ENCODE measurements at regions of chr2 and their contacts with region 1.

Region 1: DNA sequence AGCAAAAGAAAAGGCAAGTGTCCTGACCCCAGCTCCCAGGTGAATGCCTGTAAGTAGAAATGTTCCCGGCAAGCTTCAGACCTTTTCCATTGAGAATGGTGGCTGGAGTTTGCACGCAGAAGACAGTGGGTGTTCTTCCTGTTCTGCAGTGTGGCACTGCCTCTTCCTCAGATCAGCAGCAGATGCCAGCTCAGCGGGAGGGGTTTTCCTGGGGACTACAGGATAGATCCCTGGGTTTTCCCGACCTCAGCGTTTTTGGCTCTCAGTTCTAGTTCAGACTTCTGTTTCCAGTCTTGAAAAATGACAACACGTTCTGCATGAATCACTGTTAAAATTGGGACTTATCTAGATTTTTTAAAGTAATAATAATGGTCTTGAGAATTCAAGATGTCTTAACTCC is 39.2 kb downstream of the GRHL1 start:
- DNase-seq: peak; percentile 81
- ATAC-seq: peak; percentile 49

Region 2: DNA sequence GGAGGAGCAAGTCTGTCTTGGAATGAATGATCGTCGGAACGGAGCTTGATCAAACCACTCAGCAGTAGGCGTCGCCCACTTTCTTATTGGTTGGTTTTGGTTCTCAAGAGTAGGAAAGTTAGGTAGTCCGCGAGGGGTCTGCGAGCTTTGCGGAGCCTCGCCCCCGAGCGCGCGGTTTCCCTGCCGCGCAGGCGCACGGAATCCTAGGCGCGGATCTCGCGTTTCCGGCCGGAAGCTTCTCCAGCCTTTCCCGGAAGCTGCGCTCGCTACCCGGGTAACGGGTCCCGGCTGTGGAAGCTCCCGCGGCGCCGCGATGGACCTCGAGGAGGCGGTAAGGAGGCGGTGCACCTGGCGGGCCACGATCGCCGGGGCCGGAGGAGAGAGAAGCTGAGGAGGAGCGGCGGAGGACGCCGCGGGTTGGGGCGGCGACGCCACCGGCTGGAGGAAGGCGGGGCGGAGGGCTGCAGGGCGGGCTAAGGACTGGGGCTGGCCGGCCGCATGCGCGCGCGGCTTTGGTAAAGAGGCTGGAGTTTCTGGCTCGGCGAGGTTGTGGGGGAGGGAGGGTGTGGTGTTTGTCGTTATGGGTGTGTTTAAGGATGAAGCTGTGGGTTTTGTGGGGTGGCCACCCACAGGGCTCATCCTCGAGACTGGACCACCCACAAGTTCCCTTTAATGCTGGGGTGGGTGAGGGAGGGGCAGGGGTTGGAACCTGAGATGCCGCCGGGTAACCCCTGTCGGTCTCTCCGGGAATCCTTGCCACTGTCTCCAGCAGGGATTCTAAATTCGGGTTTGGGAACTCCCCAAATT is 147.3 kb before region 1 on chr2 and contains the start of gene TAF1B:
- intact Hi-C with region 1: no loop called
- DNase-seq: peak; percentile 93
- ATAC-seq: peak; percentile 97
- total RNA-seq, gene TAF1B: 6.3 TPM

Region 3: GRCh38 chr2:10036095-10036884 is 45.6 kb after region 1 on chr2:
- intact Hi-C with region 1: loop called (anchors 5 kb)
- DNase-seq: peak; percentile 81
- ATAC-seq: peak; percentile 73

Measured in Right ventricle myocardium inferior (tissue), 1 donor.